ENCODE measurements at regions of chr1 and their contacts with region 1.

Region 1: GRCh38 chr1:2141036-2141435 is 53.5 kb downstream of the FAAP20 start:
- DNase-seq: no peak
- H3K4me3 ChIP-seq: no peak overlapping the region
- H3K27ac ChIP-seq: no peak overlapping the region
- H3K4me1 ChIP-seq: no peaks in the 10 kb centered on the region
- H3K27me3 ChIP-seq: no peaks in the 10 kb centered on the region
- CTCF ChIP-seq: no peak
- EP300 ChIP-seq: no peak
- POLR2A ChIP-seq: no peak
- RAD21 ChIP-seq: no peak

Region 2: GRCh38 chr1:1989102-1989542 is 151.9 kb before region 1 on chr1:
- CTCF ChIA-PET with region 1: no interaction called
- POLR2A ChIA-PET with region 1: no interaction called
- DNase-seq: no peak
- H3K4me3 ChIP-seq: no peak overlapping the region
- H3K27ac ChIP-seq: no peak overlapping the region
- H3K4me1 ChIP-seq: peaks cover 0 to 3% (median 0%) of the 10 kb centered on the region in 4 experiments; a peak in 2 of 7 replicates
- H3K27me3 ChIP-seq: no peaks in the 10 kb centered on the region
- CTCF ChIP-seq: no peak
- EP300 ChIP-seq: no peak
- POLR2A ChIP-seq: no peak
- RAD21 ChIP-seq: no peak

Region 3: DNA sequence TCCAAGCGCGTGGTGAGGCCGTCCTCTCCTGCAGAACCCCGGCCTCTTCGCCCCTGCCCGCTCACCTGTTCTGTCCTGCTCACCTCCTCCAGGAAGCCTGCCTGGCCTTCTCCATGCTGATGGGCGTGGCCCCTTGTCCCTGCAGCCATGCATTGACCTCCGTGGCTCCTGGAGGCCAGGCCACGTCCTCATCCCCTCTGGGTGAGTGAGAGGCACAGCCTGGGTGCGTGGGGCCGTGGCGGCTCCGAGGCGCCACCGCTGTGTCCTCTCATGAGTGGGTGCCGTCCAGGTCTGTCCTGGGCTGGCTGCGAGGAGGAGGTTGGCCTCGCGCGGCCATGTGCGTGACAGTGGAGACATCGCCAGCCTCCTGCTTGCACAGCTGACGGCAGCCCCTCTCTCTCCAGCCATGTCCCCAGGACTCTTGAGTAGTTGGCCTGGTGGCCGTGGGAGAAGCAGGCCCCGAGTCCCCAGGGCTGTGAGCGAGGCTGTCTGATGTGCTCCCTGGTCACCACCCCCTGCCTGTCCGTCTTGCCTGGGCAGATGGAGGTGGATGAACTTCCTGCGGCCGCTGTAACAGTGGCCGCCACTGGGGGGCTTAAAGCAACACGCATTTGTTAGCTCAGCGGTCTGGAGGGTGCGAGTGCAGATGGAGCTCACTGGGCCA is 32.7 kb before region 1 on chr1:
- CTCF ChIA-PET with region 1: interaction called, 58 read pairs
- POLR2A ChIA-PET with region 1: no interaction called
- DNase-seq: peak; percentile 47 to 82
- H3K4me3 ChIP-seq: no peak overlapping the region
- H3K27ac ChIP-seq: no peak overlapping the region
- H3K4me1 ChIP-seq: no peaks in the 10 kb centered on the region; a peak in 1 of 7 replicates
- H3K27me3 ChIP-seq: no peaks in the 10 kb centered on the region
- CTCF ChIP-seq: peak in 2 of 3 experiments; percentile 80 to 87; a peak in 3 of 4 replicates
- EP300 ChIP-seq: no peak
- POLR2A ChIP-seq: no peak
- RAD21 ChIP-seq: peak; percentile 69 to 79

Region 4: DNA sequence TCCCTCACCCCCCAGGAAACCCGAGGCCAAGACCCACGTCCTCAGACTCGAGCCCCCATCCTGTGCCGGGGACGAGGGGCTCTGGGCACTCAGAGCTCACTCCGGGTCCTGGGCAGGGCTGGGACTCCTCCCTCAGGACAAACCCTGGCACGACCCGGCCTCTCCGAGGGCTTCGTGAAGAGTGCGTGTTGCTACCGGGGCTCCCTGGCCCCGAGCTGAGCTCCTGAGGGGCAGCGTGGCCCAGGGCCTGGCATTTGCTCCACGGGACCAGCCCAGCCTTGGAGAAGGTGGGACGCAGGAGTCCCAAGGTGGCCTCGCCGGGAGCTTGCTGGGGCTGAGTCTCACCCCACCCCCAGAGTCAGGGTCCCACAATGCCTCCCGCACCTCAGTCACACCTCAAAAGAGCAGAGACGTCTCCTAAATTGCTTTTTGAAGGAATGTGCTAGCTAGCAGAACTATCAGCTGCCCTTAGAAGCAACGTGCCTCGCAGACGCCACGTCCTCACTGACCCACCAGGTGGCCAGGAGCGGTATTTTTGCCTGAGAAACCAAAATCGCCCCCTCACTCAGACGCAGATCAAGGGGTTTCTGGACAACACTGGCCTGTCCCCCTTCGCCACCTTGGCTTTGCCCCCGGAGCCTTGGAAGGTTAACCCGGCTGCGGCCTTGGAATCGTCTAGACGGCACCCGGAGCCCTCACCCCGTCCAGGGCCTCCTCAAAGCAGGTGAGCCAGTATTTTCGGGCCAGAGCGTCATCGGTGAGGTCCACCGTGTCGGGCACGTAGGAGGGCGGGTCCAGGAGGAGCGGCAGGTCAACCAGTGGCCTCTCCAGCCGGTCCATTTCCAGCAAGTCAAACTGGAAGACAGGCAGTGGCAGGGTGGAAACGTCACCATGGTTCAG is 374.1 kb after region 1 on chr1:
- CTCF ChIA-PET with region 1: no interaction called
- POLR2A ChIA-PET with region 1: no interaction called
- DNase-seq: no peak
- H3K4me3 ChIP-seq: no peak overlapping the region
- H3K27ac ChIP-seq: no peak overlapping the region
- H3K4me1 ChIP-seq: no peaks in the 10 kb centered on the region
- H3K27me3 ChIP-seq: no peaks in the 10 kb centered on the region
- CTCF ChIP-seq: peak in 2 of 3 experiments; percentile 29 to 36; a peak in 3 of 4 replicates
- EP300 ChIP-seq: no peak
- POLR2A ChIP-seq: no peak
- RAD21 ChIP-seq: no peak; a peak in 1 of 4 replicates

Measured in H1 (cell line).